ENCODE measurements at regions of chr2 and their contacts with region 1.

Region 1: DNA sequence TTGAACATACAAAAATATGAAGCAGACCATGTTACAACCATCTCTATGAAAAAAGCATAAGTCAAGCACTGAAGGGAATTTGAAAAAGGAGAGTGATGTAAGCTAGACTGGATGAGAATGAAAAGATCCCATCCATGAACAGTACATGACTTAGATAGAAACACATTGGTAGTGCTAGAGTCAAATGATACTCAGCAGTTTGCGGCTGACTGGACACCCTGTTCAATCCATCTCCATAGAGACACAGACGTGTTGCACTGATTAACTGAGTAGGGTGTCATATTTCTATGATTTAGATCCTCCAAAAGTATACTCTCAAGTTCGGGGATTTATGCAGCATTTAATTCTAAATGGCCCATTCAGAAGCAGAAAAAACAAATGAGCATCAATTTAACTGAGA is 674.3 kb upstream of the NRXN1 start:
- DNase-seq: no peak

Region 2: GRCh38 chr2:53006980-53007379 is 1300.8 kb after region 1 on chr2:
- intact Hi-C with region 1: loop called in 1 of 2 experiments (anchors 5 kb)
- DNase-seq: no peak

Measured in posterior vena cava (tissue), 2 donors.